PC-3 (cell line): ENCODE measurements at regions of chr22 and their contacts with region 1.

Region 1: GRCh38 chr22:28600546-28601143 is 79.0 kb downstream of the TTC28 start:
- DNase-seq: peak; percentile 70
- ATAC-seq: 0 out of 2 replicates have a peak, but pooled peaks have one; percentile 22
- H3K4me3 ChIP-seq: no peak overlapping the region
- H3K27ac ChIP-seq: no peak overlapping the region
- H3K4me1 ChIP-seq: peaks cover 10% of the 10 kb centered on the region; the same call in 1 of the 2 replicates
- H3K27me3 ChIP-seq: no peaks in the 10 kb centered on the region
- CTCF ChIP-seq: peak; percentile 66

Region 2: DNA sequence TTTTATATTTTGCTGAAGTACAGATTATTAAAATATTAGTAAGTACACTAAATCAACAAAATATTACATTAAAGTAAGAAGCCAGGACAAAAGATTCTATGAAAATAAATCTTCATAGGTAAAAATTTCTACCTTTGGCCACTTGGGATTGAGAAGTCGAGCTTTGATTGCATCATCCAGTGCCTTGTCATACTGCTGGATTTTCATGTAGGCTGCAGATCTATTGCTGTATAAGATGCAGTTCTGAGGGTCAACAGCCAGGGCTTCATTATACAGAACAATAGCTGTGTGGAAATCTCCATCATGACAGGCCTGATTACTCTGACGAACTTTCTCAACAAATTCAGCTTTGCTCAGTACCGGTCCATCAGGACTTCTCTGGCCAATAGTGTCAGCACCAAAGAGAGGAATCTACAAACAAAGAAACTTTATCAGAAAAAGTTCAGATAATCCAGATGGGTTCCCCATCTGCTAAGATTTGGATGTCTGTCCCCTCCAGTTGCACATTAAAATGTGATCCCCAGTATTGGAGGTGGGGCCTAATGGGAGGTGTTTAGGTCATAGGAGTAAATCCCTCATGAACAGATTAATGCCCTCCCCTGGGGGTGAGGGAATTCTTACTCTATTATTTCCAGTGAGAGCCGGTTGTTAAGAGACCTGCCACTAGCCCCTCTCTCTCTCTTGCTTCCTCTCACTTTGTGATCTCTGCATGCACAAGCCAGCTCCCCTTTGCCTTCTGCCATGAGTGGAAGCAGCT is 29.0 kb after region 1 on chr22:
- CTCF ChIA-PET with region 1: no interaction called
- POLR2A ChIA-PET with region 1: no interaction called
- intact Hi-C with region 1: no loop called
- DNase-seq: no peak
- ATAC-seq: no peak
- H3K4me3 ChIP-seq: no peak overlapping the region
- H3K27ac ChIP-seq: no peak overlapping the region
- H3K4me1 ChIP-seq: no peaks in the 10 kb centered on the region
- H3K27me3 ChIP-seq: no peaks in the 10 kb centered on the region
- CTCF ChIP-seq: no peak

Region 3: DNA sequence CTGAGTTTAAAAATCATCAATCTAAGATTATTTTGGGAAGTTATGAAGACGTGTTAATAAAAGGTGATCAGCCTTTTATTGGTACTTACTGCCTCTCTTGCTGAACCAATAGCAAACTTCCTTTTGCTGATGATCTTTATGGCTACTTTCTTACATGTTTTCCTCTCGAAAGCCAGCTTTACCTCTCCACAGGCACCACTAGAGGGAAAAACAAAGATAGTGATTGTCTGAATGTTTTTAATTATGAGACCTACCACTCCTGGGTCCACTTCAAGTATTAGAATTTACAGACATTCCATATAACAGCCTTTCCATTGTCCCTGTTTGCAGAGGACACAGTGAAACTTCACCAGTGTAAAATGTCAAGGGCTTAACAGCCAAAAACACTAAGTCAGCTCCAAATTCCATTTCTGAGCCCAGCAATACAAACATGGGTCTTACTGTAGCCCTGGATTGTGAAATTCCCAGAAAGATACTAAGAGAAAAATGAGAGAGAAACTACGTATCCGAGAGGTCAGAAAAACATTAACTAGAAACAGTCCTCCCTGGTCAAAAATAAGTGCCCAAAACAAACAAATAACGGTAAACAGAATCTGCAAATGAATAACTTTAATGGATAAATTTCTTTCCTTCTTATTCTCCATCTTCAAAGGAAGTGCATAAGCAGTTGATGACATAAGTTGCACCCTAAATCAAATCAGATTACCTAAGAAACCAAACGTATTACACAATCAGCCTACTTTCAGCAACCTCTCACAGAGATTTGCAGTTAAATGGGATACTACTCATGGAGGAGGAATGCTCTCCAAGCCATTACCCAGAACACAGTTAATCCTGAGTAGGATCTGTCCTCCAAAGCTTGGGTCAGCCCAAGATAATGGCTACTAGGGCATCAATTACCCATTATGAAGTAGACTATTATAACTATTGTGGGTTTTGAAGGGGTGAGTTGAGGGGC is 111.5 kb after region 1 on chr22:
- CTCF ChIA-PET with region 1: no interaction called
- POLR2A ChIA-PET with region 1: interaction called, 3 read pairs
- intact Hi-C with region 1: loop called (anchors 5 kb)
- DNase-seq: peak; percentile 64
- ATAC-seq: no peak
- H3K4me3 ChIP-seq: no peak overlapping the region
- H3K27ac ChIP-seq: no peak overlapping the region
- H3K4me1 ChIP-seq: peaks cover 34% of the 10 kb centered on the region
- H3K27me3 ChIP-seq: no peaks in the 10 kb centered on the region
- CTCF ChIP-seq: no peak

Region 4: DNA sequence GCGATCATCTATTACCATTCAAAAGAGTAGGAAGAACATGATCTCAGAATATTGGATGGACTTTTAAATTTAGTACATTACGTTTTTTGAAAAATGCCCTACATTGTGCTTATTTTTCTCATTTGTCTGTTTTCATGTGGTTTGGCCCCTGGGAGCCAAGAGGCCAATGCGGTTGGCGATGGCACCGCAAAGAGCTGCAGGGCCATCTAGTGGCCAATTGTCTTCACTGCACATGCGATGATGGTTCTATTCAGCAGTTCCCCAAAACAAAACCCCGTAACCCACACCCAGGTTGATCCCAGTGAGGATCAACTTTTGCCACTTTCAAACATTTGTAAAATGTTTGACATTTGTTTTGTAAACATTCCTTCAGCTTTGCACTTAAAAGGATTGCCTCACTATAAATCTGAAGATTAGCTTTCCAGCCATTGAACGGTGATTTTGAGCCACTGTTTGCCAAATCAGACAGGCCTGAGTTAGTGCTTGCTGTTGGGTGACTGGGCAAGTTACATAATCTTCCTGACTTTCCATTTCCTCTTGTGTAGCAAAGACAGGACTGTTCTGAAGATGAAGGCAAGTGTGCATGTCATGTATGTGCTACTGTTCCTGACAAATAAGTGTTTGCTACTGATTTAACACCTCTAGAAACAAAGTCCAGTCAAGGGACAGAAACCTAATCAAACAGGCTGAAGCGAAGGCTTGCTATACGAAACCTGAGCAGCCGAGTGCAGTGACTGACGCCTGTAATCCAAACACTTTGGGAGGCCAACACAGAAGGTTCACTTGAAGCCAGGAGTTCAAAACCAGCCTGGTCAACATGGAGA is 228.9 kb after region 1 on chr22:
- CTCF ChIA-PET with region 1: interaction called, 4 read pairs
- POLR2A ChIA-PET with region 1: no interaction called
- intact Hi-C with region 1: loop called (anchors 1 kb)
- DNase-seq: peak; percentile 80
- ATAC-seq: peak; percentile 51; the same call in 1 of the 2 replicates
- H3K4me3 ChIP-seq: no peak overlapping the region
- H3K27ac ChIP-seq: no peak overlapping the region
- H3K4me1 ChIP-seq: no peaks in the 10 kb centered on the region
- H3K27me3 ChIP-seq: no peaks in the 10 kb centered on the region
- CTCF ChIP-seq: peak; percentile 90

Region 5: GRCh38 chr22:28843633-28844032 is 243.0 kb after region 1 on chr22:
- CTCF ChIA-PET with region 1: no interaction called
- POLR2A ChIA-PET with region 1: interaction called, 14 read pairs
- intact Hi-C with region 1: no loop called
- DNase-seq: no peak
- ATAC-seq: no peak
- H3K4me3 ChIP-seq: no peak overlapping the region
- H3K27ac ChIP-seq: no peak overlapping the region
- H3K4me1 ChIP-seq: no peaks in the 10 kb centered on the region
- H3K27me3 ChIP-seq: no peaks in the 10 kb centered on the region
- CTCF ChIP-seq: no peak